Colonic mucosa (tissue), 4 donors: ENCODE measurements at regions of chr20 and their contacts with region 1.

Region 1: DNA sequence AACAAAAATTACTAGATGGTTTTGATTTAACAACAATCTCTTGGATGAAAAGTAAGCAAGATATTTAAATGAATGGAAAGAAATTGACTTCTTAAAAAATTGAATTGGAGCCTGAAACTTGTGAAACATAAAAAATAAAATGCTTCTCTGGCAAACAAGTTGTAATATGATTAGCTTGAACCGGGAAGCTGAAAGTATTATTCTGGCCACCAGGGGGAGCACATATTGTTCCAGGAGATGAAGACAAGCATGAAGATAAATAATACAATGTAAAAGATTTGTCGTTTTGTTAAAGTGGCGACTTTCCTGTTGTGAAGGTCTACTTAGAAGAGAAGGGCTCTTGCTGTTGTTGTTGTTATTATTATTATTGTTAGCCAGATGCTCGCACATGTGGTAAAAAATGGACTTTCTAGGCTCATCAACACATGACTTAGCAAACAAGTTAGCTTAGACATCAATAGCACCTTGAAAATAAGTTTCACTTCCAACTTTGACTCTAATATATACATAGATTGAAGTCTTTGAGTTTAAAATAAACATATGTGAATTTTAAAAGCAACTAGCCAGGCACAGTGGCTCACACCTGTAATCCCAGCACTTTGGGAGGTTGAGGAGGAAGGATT is 14.2 kb downstream of the PAX1 start:
- DNase-seq: peak; percentile 61
- H3K4me3 ChIP-seq: no peak overlapping the region
- H3K27ac ChIP-seq: no peak overlapping the region
- H3K4me1 ChIP-seq: no peaks in the 10 kb centered on the region
- H3K27me3 ChIP-seq: peaks cover 6% of the 10 kb centered on the region
- CTCF ChIP-seq: peak; percentile 78

Region 2: DNA sequence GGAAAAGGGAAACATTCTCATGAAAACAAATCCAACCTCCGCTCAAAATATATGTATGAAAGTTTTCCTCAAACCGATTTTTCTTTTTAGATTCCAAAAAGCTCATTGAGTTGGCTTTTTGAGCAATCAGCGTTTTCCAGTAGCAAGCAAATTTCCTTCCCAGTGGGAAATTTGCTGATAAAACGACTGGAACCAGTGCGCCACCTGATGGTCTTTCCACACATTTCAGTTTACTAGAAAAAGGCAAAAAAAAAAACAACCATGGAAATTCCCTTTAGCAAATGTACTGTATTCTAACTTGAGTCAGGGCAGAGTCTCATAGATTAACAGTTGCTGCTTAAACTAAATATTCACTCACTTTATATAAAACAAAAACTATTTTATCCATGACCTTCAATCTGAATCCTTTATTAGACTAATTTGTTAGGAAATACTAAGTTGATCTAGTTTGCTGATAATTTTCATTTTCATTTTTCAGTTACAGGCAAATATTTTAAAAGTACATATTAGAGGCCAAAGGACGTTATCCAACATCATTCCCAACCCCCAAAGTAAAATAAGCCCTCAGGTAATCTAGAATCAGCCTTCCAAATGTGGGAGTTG is 593.1 kb after region 1 on chr20:
- intact Hi-C with region 1: loop called (anchors 5 kb)
- DNase-seq: peak; percentile 24
- H3K4me3 ChIP-seq: no peak overlapping the region
- H3K27ac ChIP-seq: no peak overlapping the region
- H3K4me1 ChIP-seq: no peaks in the 10 kb centered on the region
- H3K27me3 ChIP-seq: no peaks in the 10 kb centered on the region
- CTCF ChIP-seq: peak; percentile 54